Panc1 (cell line): ENCODE measurements at regions of chr5 and their contacts with region 1.

Region 1: GRCh38 chr5:169548315-169548714 is 35.3 kb upstream of the SPDL1 start:
- DNase-seq: peak; percentile 33
- ATAC-seq: peak; percentile 95
- H3K4me3 ChIP-seq: no peak overlapping the region
- H3K27ac ChIP-seq: peak overlapping the region; percentile 64; the same call in 1 of the 2 replicates
- H3K4me1 ChIP-seq: no peaks in the 10 kb centered on the region; the same call in 1 of the 2 replicates
- H3K27me3 ChIP-seq: no peaks in the 10 kb centered on the region
- CTCF ChIP-seq: peak; percentile 66; the same call in 1 of the 2 replicates

Region 2: GRCh38 chr5:169116961-169117461 is 431.3 kb before region 1 on chr5:
- CTCF ChIA-PET with region 1: interaction called, 15 read pairs
- POLR2A ChIA-PET with region 1: no interaction called
- in situ Hi-C with region 1: no loop called
- intact Hi-C with region 1: no loop called
- DNase-seq: no peak
- ATAC-seq: no peak
- H3K4me3 ChIP-seq: no peak overlapping the region
- H3K27ac ChIP-seq: no peak overlapping the region
- H3K4me1 ChIP-seq: no peaks in the 10 kb centered on the region
- H3K27me3 ChIP-seq: no peaks in the 10 kb centered on the region
- CTCF ChIP-seq: no peak

Region 3: GRCh38 chr5:169302491-169303118 is 245.7 kb before region 1 on chr5:
- CTCF ChIA-PET with region 1: interaction called, 4 read pairs
- POLR2A ChIA-PET with region 1: no interaction called
- in situ Hi-C with region 1: no loop called
- intact Hi-C with region 1: loop called (anchors 5 kb)
- DNase-seq: peak; percentile 69
- ATAC-seq: peak; percentile 44; the same call in 1 of the 2 replicates
- H3K4me3 ChIP-seq: no peak overlapping the region
- H3K27ac ChIP-seq: peak overlapping the region; percentile 64; the same call in 1 of the 2 replicates
- H3K4me1 ChIP-seq: peaks cover 6% of the 10 kb centered on the region
- H3K27me3 ChIP-seq: no peaks in the 10 kb centered on the region
- CTCF ChIP-seq: peak; percentile 92